ENCODE measurements at regions of chr2 and their contacts with region 1.

Region 1: GRCh38 chr2:127453392-127454171 is 35.4 kb downstream of the PROC start:
- DNase-seq: peak; percentile 28
- ATAC-seq: peak; percentile 72
- H3K4me3 Mint-ChIP-seq: no peak overlapping the region
- H3K27ac Mint-ChIP-seq: no peak overlapping the region
- H3K4me1 Mint-ChIP-seq: peaks cover 49% of the 10 kb centered on the region
- H3K27me3 Mint-ChIP-seq: no peaks in the 10 kb centered on the region
- CTCF ChIP-seq: no peak

Region 2: DNA sequence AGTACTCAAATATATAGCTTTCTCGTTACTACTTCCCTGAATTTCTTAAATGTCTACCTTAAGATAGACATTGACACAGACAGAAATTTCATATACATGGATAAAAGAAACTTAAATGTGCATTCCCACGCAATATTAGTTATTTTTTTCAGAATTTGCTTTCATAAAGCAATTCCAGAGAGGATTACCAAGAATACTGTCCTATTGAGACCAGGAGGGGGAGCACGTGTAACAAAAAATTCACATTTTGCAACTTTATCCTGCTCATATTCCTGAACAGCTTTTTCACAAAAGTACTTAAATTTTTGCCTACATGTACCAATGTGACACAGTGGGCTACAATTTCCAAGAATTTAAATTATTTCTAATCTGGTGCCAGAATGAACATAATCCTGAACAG is 128.9 kb before region 1 on chr2:
- CTCF ChIA-PET with region 1: interaction called, 10 read pairs
- POLR2A ChIA-PET with region 1: no interaction called
- DNase-seq: no peak
- ATAC-seq: no peak
- H3K4me3 Mint-ChIP-seq: no peak overlapping the region
- H3K27ac Mint-ChIP-seq: no peak overlapping the region
- H3K4me1 Mint-ChIP-seq: no peaks in the 10 kb centered on the region
- H3K27me3 Mint-ChIP-seq: no peaks in the 10 kb centered on the region
- CTCF ChIP-seq: peak; percentile 29; the same call in 1 of the 2 replicates

Region 3: GRCh38 chr2:127423880-127424279 is 29.7 kb before region 1 on chr2:
- CTCF ChIA-PET with region 1: interaction called, 13 read pairs
- POLR2A ChIA-PET with region 1: no interaction called
- DNase-seq: no peak
- ATAC-seq: no peak
- H3K4me3 Mint-ChIP-seq: peak overlapping the region; percentile 63
- H3K27ac Mint-ChIP-seq: no peak overlapping the region
- H3K4me1 Mint-ChIP-seq: peaks cover 15% of the 10 kb centered on the region
- H3K27me3 Mint-ChIP-seq: peaks cover 48% of the 10 kb centered on the region
- CTCF ChIP-seq: no peak

Region 4: GRCh38 chr2:127479219-127479825 is 25.7 kb after region 1 on chr2:
- CTCF ChIA-PET with region 1: interaction called, 21 read pairs
- POLR2A ChIA-PET with region 1: no interaction called
- DNase-seq: no peak
- ATAC-seq: peak; percentile 56
- H3K4me3 Mint-ChIP-seq: no peak overlapping the region
- H3K27ac Mint-ChIP-seq: no peak overlapping the region
- H3K4me1 Mint-ChIP-seq: peaks cover 34% of the 10 kb centered on the region
- H3K27me3 Mint-ChIP-seq: no peaks in the 10 kb centered on the region
- CTCF ChIP-seq: peak; percentile 39; the same call in 1 of the 2 replicates